Activated CD4-positive, alpha-beta T cell treated with anti-CD3 and anti-CD28 coated beads for 36 hours (primary cell): ENCODE measurements at regions of chr21 and their contacts with region 1.

Region 1: GRCh38 chr21:44279354-44280260 is 6.1 kb upstream of the AIRE start:
- DNase-seq: no peak
- ATAC-seq: no peak
- H3K4me3 Mint-ChIP-seq: no peak overlapping the region
- H3K27ac Mint-ChIP-seq: no peak overlapping the region
- H3K4me1 Mint-ChIP-seq: no peaks in the 10 kb centered on the region
- H3K27me3 Mint-ChIP-seq: no peaks in the 10 kb centered on the region

Region 2: DNA sequence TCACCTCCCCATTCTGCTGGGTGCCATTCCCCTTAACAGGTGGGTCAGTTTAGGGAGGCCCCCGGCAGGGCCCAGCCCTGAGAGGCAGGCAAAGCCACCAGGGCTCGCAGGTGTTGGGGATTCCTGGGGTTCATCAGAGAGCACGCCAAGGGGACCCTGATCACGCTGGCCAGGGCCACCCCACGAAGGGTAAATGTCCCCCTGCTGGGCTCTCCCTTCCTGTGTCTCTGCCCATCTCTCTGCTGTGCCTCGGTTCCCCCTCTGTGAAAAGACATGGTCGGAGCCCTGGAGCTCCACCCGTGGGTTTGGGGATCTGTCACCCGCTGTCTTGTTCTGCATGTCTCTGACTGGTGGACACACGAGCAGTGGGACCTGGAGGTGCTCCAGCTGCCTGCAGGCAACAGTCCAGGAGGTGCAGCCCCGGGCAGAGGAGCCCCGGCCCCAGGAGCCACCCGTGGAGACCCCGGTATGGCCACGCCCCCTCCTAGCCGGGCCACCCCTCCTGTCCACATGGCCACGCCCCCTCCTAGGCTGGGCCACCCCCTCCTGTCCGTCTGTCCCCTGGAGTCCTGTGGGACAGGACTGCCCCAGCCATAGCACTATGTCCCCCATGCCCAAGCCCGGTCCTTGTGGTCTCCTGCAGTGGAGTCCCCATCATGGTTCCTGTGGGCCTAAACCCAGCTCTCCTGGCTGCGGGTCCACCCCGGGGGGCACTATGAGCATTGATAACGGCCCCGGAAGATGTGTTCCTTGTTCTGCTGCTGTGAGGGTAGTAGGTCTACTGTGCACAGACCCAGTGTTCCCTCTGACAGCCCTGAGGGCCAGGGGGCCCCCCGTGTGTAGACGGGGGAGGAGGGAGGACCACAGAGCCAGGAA is 12.6 kb after region 1 on chr21:
- CTCF ChIA-PET with region 1: no interaction called
- POLR2A ChIA-PET with region 1: no interaction called
- intact Hi-C with region 1: loop called in 1 of 2 experiments (anchors 2 kb)
- DNase-seq: no peak
- ATAC-seq: no peak
- H3K4me3 Mint-ChIP-seq: no peak overlapping the region
- H3K27ac Mint-ChIP-seq: no peak overlapping the region
- H3K4me1 Mint-ChIP-seq: peaks cover 8% of the 10 kb centered on the region
- H3K27me3 Mint-ChIP-seq: no peaks in the 10 kb centered on the region

Region 3: GRCh38 chr21:44322621-44323325 is 43.2 kb after region 1 on chr21:
- CTCF ChIA-PET with region 1: no interaction called
- POLR2A ChIA-PET with region 1: no interaction called
- intact Hi-C with region 1: loop called in 1 of 2 experiments (anchors 5 kb)
- DNase-seq: no peak
- ATAC-seq: no peak
- H3K4me3 Mint-ChIP-seq: no peak overlapping the region
- H3K27ac Mint-ChIP-seq: no peak overlapping the region
- H3K4me1 Mint-ChIP-seq: no peaks in the 10 kb centered on the region
- H3K27me3 Mint-ChIP-seq: no peaks in the 10 kb centered on the region

Region 4: GRCh38 chr21:44390886-44391717 is 111.5 kb after region 1 on chr21:
- CTCF ChIA-PET with region 1: no interaction called
- POLR2A ChIA-PET with region 1: no interaction called
- intact Hi-C with region 1: no loop called
- DNase-seq: no peak
- ATAC-seq: no peak
- H3K4me3 Mint-ChIP-seq: no peak overlapping the region
- H3K27ac Mint-ChIP-seq: no peak overlapping the region
- H3K4me1 Mint-ChIP-seq: no peaks in the 10 kb centered on the region
- H3K27me3 Mint-ChIP-seq: no peaks in the 10 kb centered on the region

Region 5: GRCh38 chr21:45130324-45130774 is 850.7 kb after region 1 on chr21:
- CTCF ChIA-PET with region 1: no interaction called
- POLR2A ChIA-PET with region 1: no interaction called
- intact Hi-C with region 1: no loop called
- DNase-seq: no peak
- ATAC-seq: peak; percentile 35
- H3K4me3 Mint-ChIP-seq: no peak overlapping the region
- H3K27ac Mint-ChIP-seq: no peak overlapping the region
- H3K4me1 Mint-ChIP-seq: peaks cover 31% of the 10 kb centered on the region
- H3K27me3 Mint-ChIP-seq: no peaks in the 10 kb centered on the region